ENCODE measurements at regions of chr12 and their contacts with region 1.

Region 1: DNA sequence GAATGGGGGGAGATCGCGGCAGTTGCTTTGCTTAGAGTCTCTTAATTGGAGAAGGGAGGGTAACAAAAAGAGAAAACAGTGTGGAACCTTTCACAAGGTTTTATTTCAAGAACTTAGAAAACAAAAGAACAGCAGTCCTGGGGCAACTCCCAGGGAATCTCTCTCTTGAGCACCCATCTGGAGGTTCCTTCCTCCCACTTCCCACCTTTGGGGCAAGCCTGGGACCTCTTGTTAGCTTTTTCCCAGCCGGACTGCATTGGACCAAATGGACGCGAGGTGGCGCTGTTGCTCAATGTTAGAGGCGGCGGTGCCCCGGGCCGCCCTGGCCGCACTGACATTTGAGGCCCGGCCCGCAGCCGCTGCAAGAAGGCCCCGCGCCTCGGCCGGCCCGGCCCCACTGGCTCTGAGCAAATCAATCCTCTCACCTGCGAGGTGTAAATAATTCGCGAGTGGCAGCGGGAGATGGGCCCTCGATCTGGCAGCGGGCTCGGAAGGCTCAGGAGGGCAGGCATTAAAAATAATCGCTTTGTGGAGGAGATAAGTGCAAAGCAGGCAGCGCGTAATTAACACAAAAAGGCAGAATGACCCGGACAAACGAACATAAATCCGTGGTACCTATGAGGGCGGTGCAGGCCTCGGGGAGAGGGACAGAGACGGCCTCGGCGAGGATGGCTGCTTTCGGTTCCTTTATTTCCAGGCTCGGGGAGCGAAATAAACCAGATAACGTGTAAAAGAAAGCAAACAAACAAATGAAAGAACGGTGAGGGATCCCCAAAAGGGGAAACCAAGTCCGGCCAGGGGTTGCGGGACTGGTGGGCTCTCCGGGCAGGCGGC is 2.7 kb upstream of the HOXC8 start:
- DNase-seq: peak; percentile 79
- H3K4me3 ChIP-seq: no peak overlapping the region
- H3K27ac ChIP-seq: no peak overlapping the region
- H3K4me1 ChIP-seq: no peaks in the 10 kb centered on the region
- H3K27me3 ChIP-seq: peaks cover 79 to 89% of the 10 kb centered on the region in 2 experiments
- CTCF ChIP-seq: peak; percentile 84 to 86
- POLR2A ChIP-seq: no peak

Region 2: GRCh38 chr12:53995378-53996239 is 10.5 kb before region 1 on chr12:
- CTCF ChIA-PET with region 1: interaction called, 24 read pairs
- POLR2A ChIA-PET with region 1: no interaction called
- dilution Hi-C with region 1: no loop called
- intact Hi-C with region 1: no loop called
- DNase-seq: no peak
- H3K4me3 ChIP-seq: peak overlapping the region in 1 of 3 experiments; percentile 23
- H3K27ac ChIP-seq: no peak overlapping the region
- H3K4me1 ChIP-seq: no peaks in the 10 kb centered on the region
- H3K27me3 ChIP-seq: peaks cover 85 to 99% of the 10 kb centered on the region in 2 experiments
- CTCF ChIP-seq: no peak
- POLR2A ChIP-seq: no peak

Region 3: GRCh38 chr12:54032627-54033100 is 26.6 kb after region 1 on chr12 and contains the start of gene HOXC5:
- CTCF ChIA-PET with region 1: interaction called, 13 read pairs
- POLR2A ChIA-PET with region 1: no interaction called
- dilution Hi-C with region 1: no loop called
- intact Hi-C with region 1: no loop called
- DNase-seq: peak; percentile 37
- H3K4me3 ChIP-seq: no peak within 1 kb of the TSS
- H3K27ac ChIP-seq: no peak within 1 kb of the TSS
- H3K4me1 ChIP-seq: no peaks in the 10 kb centered on the region
- H3K27me3 ChIP-seq: peaks cover 79 to 88% of the 10 kb centered on the region in 2 experiments
- CTCF ChIP-seq: peak; percentile 79 to 81
- POLR2A ChIP-seq: no peak
- total RNA-seq, gene HOXC5: not detected in 2 replicates

Region 4: GRCh38 chr12:54201001-54201794 is 195.1 kb after region 1 on chr12:
- CTCF ChIA-PET with region 1: interaction called, 616 read pairs
- POLR2A ChIA-PET with region 1: interaction called, 3 read pairs
- dilution Hi-C with region 1: no loop called
- intact Hi-C with region 1: loop called (anchors 1 kb)
- DNase-seq: peak; percentile 52
- H3K4me3 ChIP-seq: no peak overlapping the region
- H3K27ac ChIP-seq: no peak overlapping the region
- H3K4me1 ChIP-seq: no peaks in the 10 kb centered on the region
- H3K27me3 ChIP-seq: peaks cover 22 to 37% of the 10 kb centered on the region in 2 experiments
- CTCF ChIP-seq: peak; percentile 86 to 99
- POLR2A ChIP-seq: no peak

Region 5: DNA sequence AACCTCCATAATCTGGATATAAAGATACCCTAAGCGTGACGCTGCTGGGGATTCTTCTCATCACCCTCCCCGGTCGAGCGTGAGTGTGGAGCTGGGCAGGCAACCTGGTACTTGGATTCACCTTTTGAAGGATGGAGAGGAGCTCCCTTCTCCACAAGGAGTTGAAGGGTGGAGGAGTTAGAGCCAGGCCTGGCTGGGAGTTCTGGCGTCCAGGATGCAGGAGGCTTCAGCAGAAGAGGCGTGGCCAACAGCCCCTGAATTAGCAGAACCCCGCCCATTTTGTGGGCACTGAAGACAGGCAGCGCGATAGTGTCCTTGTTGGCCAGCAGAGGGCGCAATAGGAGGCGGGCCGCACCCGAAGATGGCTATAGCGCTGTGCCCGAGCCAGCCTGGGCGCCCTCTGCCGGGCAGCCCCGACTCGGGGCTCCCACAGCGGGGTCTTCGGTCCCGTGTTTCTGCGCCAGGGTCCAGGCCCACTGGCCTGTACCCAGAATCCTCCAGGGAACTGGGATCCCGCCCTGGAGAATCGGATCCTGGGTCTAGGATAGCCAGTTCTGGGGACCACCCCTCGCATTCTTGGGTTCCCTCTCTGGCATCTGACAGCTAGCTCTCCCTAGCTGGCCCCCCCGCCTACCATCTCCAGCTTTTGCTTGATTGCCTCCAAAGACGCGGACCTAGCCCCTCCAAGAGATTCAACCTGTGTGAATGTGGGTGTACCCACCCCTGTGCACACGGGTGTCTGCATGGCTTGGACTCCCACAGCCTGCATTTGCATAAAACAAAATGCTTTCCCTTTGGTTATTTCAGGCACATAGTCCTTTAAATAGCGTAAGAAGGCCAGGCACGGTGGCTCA is 208.7 kb after region 1 on chr12:
- CTCF ChIA-PET with region 1: interaction called, 235 read pairs
- POLR2A ChIA-PET with region 1: no interaction called
- dilution Hi-C with region 1: no loop called
- intact Hi-C with region 1: no loop called
- DNase-seq: peak; percentile 92
- H3K4me3 ChIP-seq: peak overlapping the region in 1 of 3 experiments; percentile 17
- H3K27ac ChIP-seq: no peak overlapping the region
- H3K4me1 ChIP-seq: peaks cover 14% of the 10 kb centered on the region
- H3K27me3 ChIP-seq: peaks cover 7 to 16% of the 10 kb centered on the region in 2 experiments
- CTCF ChIP-seq: peak; percentile 100
- POLR2A ChIP-seq: no peak